Calu3 (cell line): ENCODE measurements at regions of chr15 and their contacts with region 1.

Region 1: DNA sequence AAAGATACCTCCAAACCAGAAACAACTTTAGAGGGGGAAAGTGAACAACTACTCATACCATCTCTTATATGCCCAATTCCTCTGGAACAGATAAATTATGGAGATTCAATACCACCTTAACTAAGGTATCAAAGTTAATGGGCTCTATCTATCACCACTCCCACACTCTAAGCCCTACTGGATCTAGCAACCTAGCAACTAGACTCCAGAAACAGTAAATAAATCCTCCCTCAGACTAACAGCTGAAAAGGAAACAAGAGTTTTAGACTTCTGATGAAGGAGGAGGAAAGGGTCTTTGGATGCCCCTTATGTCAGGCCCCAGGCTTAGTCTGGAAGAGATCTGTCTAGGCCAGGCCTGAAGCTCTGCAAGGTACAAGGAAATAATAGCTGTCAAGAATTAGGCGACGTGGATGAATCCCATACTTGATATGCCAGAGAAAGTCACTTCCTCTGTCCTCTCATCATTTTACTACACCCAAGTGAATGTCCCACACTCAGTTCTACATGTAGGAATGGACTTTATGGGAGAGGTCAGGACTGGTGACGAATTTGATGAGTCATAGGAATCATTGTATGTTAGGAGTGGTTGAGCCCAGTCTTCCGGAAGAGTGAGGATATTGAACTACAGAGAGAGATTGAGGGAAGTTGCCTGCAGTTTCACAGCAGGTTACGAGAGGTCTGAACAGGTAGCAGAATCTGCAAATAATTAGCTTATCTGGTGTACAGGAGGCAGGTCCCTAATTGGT is 113.8 kb downstream of the AKAP13 start:
- DNase-seq: peak; percentile 59
- H3K4me3 Mint-ChIP-seq: peak overlapping the region; percentile 12
- H3K27ac Mint-ChIP-seq: peak overlapping the region; percentile 78
- H3K4me1 Mint-ChIP-seq: peaks cover 56% of the 10 kb centered on the region
- H3K27me3 Mint-ChIP-seq: no peaks in the 10 kb centered on the region
- CTCF ChIP-seq: no peak

Region 2: GRCh38 chr15:85456798-85457197 is 37.4 kb before region 1 on chr15:
- CTCF ChIA-PET with region 1: no interaction called
- intact Hi-C with region 1: no loop called
- DNase-seq: no peak
- H3K4me3 Mint-ChIP-seq: no peak overlapping the region
- H3K27ac Mint-ChIP-seq: no peak overlapping the region
- H3K4me1 Mint-ChIP-seq: peaks cover 55% of the 10 kb centered on the region
- H3K27me3 Mint-ChIP-seq: no peaks in the 10 kb centered on the region
- CTCF ChIP-seq: no peak

Region 3: GRCh38 chr15:85563328-85563727 is 69.1 kb after region 1 on chr15:
- CTCF ChIA-PET with region 1: no interaction called
- intact Hi-C with region 1: loop called (anchors 5 kb)
- DNase-seq: peak; percentile 52
- H3K4me3 Mint-ChIP-seq: peak overlapping the region; percentile 17
- H3K27ac Mint-ChIP-seq: peak overlapping the region; percentile 80
- H3K4me1 Mint-ChIP-seq: peaks cover 40% of the 10 kb centered on the region
- H3K27me3 Mint-ChIP-seq: no peaks in the 10 kb centered on the region
- CTCF ChIP-seq: no peak

Region 4: DNA sequence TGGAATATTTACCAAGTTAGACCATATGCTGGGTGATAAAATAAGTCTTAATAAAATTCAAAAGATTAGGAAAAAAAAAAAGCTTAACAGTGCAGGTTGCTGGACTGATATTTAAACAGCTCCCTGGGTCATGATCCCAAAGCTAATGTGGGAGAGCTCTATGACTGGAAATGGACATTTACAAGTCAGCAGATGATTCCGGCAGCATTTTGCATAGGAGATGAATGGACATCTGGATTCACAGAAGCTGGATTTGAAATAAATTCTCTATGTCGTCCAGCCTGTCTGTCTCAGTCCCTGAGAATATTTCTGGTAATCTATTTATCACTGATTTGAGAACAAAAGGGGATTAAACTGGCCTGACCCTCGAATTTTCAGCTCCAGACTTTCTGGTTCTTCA is 352.8 kb after region 1 on chr15:
- CTCF ChIA-PET with region 1: no interaction called
- intact Hi-C with region 1: no loop called
- DNase-seq: no peak
- H3K4me3 Mint-ChIP-seq: no peak overlapping the region
- H3K27ac Mint-ChIP-seq: no peak overlapping the region
- H3K4me1 Mint-ChIP-seq: no peaks in the 10 kb centered on the region
- H3K27me3 Mint-ChIP-seq: peaks cover 48% of the 10 kb centered on the region
- CTCF ChIP-seq: no peak